PC-3 (cell line): ENCODE measurements at regions of chr11 and their contacts with region 1.

Region 1: GRCh38 chr11:117426269-117426685 is 98.6 kb downstream of the CEP164 start:
- DNase-seq: peak; percentile 84
- ATAC-seq: peak; percentile 75
- H3K4me3 ChIP-seq: no peak overlapping the region
- H3K27ac ChIP-seq: no peak overlapping the region
- H3K4me1 ChIP-seq: no peaks in the 10 kb centered on the region
- H3K27me3 ChIP-seq: peaks cover 43% of the 10 kb centered on the region
- CTCF ChIP-seq: peak; percentile 98

Region 2: GRCh38 chr11:117443266-117444195 is 17.3 kb after region 1 on chr11:
- CTCF ChIA-PET with region 1: no interaction called
- POLR2A ChIA-PET with region 1: no interaction called
- intact Hi-C with region 1: no loop called
- DNase-seq: peak; percentile 55
- ATAC-seq: peak; percentile 85
- H3K4me3 ChIP-seq: no peak overlapping the region
- H3K27ac ChIP-seq: no peak overlapping the region
- H3K4me1 ChIP-seq: no peaks in the 10 kb centered on the region
- H3K27me3 ChIP-seq: peaks cover 82% of the 10 kb centered on the region
- CTCF ChIP-seq: peak; percentile 66

Region 3: DNA sequence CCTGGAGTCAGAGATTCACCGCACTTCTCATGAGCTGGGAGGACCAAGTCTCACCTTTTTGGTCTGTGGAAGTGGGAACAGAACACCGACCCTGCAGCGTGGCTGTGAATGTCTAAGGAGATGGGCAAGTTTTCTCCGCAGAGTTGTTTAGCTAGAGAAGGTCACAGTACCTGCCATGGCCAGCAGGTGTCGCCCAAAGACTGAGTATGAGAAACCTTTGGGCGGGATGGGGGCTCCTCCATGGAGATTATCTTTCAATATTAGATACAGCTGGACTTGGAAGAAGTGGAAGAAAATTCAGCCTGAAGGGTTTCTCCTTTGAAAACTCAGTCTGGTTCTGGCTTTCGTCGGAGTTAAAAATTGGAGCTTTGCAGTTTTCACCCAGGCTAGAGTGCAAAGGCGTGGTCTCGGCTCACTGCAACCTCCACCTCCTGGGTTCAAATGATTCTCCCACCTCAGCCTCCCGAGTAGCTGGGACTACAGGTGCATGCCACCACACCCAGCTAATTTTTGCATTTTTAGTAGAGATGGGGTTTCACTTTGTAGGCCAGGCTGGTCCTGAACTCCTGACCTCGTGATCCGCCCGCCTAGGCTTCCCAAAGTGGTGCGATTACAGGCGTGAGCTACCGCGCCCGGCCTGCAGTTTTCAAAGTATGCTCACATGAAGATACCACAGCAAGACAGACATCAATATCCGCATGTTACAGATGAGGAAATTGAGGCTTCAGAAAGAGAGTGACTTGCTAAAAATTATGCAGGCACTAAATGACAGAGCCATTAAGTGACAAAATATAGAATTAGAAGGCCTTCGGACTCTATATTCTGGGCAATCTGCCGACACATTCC is 381.4 kb after region 1 on chr11:
- CTCF ChIA-PET with region 1: interaction called, 14 read pairs
- POLR2A ChIA-PET with region 1: no interaction called
- intact Hi-C with region 1: no loop called
- DNase-seq: peak; percentile 81
- ATAC-seq: peak; percentile 73
- H3K4me3 ChIP-seq: no peak overlapping the region
- H3K27ac ChIP-seq: no peak overlapping the region
- H3K4me1 ChIP-seq: no peaks in the 10 kb centered on the region
- H3K27me3 ChIP-seq: peaks cover 55% of the 10 kb centered on the region
- CTCF ChIP-seq: peak; percentile 94

Region 4: DNA sequence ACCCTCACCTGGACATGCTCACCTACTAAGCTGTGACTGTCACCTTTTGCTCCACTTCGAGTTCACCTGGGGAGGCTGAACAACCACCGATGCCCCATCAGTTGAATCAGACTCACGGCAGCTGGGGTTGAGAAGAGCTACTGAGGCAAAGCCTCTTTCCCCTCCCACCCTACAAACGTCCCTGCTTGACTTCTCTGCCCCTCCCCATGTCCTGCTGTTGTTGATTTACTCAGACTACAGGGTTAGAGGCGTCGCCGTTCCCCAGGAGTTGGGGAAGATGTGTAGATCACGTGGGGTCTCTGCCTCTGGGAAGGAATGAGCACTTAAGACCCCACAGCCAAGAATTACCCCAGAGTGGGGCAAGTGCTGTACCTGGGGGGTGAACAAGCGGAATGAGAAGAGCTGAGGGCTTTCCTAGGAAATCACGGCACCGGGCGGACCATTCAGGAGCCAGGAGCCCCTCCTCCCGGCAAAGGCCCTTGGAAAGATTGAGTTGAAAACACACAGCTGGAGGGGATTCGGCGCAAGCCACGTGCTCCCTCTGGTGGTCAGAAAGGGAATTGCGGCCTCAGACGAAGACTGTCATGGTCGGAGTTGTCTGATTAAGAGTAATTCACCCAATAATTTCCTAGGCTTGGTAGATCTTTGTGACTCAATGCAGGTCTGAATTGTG is 391.2 kb after region 1 on chr11:
- CTCF ChIA-PET with region 1: interaction called, 13 read pairs
- POLR2A ChIA-PET with region 1: no interaction called
- intact Hi-C with region 1: loop called (anchors 5 kb)
- DNase-seq: peak; percentile 89
- ATAC-seq: peak; percentile 68
- H3K4me3 ChIP-seq: no peak overlapping the region
- H3K27ac ChIP-seq: no peak overlapping the region
- H3K4me1 ChIP-seq: peaks cover 14% of the 10 kb centered on the region
- H3K27me3 ChIP-seq: peaks cover 12% of the 10 kb centered on the region; the same call in 1 of the 2 replicates
- CTCF ChIP-seq: peak; percentile 99

Region 5: DNA sequence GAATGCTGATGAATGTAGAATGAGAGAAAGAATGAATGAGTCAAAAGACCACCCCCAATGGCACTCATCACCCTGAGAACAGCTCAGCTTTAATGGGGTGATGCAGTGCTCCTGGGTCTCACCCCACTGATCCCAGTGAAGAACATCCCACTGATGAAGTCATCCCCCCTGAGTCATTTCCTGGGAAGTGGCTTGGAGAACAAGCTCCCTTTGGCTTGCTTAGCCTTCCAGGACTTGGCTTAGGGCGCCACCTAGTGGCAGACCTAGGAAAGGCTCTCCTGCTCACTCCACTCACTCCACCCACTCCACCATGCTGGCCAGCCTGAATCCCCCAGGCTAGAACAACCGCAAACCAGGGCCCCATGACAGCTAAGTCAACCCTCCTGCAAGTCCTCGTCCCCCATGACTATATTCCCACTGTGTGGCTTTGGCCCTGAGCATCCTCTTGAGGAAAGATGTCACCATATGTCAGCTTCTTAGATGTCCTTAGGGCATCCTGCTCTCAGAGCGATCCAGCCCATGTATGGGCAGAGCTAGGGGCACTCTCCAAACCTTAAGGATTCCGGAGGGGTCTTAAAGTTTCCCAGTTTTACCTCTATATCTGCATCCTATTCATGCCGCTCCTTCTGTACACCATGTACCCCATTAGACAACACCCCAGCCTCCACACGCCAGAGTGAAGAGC is 520.7 kb after region 1 on chr11:
- CTCF ChIA-PET with region 1: interaction called, 4 read pairs
- POLR2A ChIA-PET with region 1: no interaction called
- intact Hi-C with region 1: loop called (anchors 5 kb)
- DNase-seq: peak; percentile 97
- ATAC-seq: peak; percentile 98
- H3K4me3 ChIP-seq: no peak overlapping the region
- H3K27ac ChIP-seq: no peak overlapping the region
- H3K4me1 ChIP-seq: 0 out of 2 replicates have a peak, but pooled peaks cover 4% of the 10 kb centered on the region
- H3K27me3 ChIP-seq: peaks cover 31% of the 10 kb centered on the region
- CTCF ChIP-seq: peak; percentile 99

Region 6: GRCh38 chr11:118051611-118052461 is 625.6 kb after region 1 on chr11:
- CTCF ChIA-PET with region 1: interaction called, 5 read pairs
- POLR2A ChIA-PET with region 1: no interaction called
- intact Hi-C with region 1: loop called (anchors 2 kb)
- DNase-seq: no peak
- ATAC-seq: no peak
- H3K4me3 ChIP-seq: no peak overlapping the region
- H3K27ac ChIP-seq: no peak overlapping the region
- H3K4me1 ChIP-seq: no peaks in the 10 kb centered on the region
- H3K27me3 ChIP-seq: peaks cover 84% of the 10 kb centered on the region
- CTCF ChIP-seq: no peak

Region 7: GRCh38 chr11:118240999-118241768 is 814.9 kb after region 1 on chr11:
- CTCF ChIA-PET with region 1: no interaction called
- POLR2A ChIA-PET with region 1: no interaction called
- intact Hi-C with region 1: no loop called
- DNase-seq: peak; percentile 98
- ATAC-seq: peak; percentile 98
- H3K4me3 ChIP-seq: peak overlapping the region; percentile 22; the same call in 1 of the 2 replicates
- H3K27ac ChIP-seq: peak overlapping the region; percentile 75
- H3K4me1 ChIP-seq: peaks cover 37% of the 10 kb centered on the region
- H3K27me3 ChIP-seq: no peaks in the 10 kb centered on the region
- CTCF ChIP-seq: no peak